MCF 10A (cell line): ENCODE measurements at regions of chr15 and their contacts with region 1.

Region 1: DNA sequence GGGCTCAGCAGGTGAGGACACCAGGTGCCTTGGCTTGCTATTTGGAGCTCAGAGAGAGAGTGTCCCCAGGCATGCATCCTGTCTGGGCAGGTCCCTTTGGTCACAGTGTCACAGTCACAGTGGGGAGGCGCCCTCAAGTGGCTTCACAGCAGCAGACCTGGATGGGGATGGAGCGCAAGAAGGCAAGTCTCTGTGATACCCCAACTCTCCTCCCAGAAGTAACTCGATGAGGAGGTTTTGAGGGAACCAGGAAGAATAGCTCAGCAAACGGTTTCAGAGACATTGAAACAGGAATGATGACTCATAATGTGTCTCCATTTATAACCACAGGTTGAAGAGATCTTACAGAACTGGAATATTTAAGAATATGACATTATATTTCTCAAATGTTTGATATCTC is 66.5 kb upstream of the SH3GL3 start:
- DNase-seq: peak; percentile 79
- H3K4me3 Mint-ChIP-seq: peak overlapping the region; percentile 17
- H3K27ac Mint-ChIP-seq: peak overlapping the region; percentile 87
- H3K4me1 Mint-ChIP-seq: peaks cover 37% of the 10 kb centered on the region
- H3K27me3 Mint-ChIP-seq: no peaks in the 10 kb centered on the region
- CTCF ChIP-seq: peak; percentile 26

Region 2: GRCh38 chr15:83011271-83012075 is 369.2 kb before region 1 on chr15 and contains the start of gene C15orf40:
- CTCF ChIA-PET with region 1: no interaction called
- POLR2A ChIA-PET with region 1: interaction called, 4 read pairs
- intact Hi-C with region 1: loop called (anchors 2 kb)
- DNase-seq: peak; percentile 89
- H3K4me3 Mint-ChIP-seq: peak within 1 kb of the TSS; percentile 82
- H3K27ac Mint-ChIP-seq: peak within 1 kb of the TSS; percentile 82
- H3K4me1 Mint-ChIP-seq: peaks cover 24% of the 10 kb centered on the region
- H3K27me3 Mint-ChIP-seq: no peaks in the 10 kb centered on the region
- CTCF ChIP-seq: peak; percentile 37
- total RNA-seq, gene C15orf40: 38.1 and 39.3 TPM in 2 replicates

Region 3: DNA sequence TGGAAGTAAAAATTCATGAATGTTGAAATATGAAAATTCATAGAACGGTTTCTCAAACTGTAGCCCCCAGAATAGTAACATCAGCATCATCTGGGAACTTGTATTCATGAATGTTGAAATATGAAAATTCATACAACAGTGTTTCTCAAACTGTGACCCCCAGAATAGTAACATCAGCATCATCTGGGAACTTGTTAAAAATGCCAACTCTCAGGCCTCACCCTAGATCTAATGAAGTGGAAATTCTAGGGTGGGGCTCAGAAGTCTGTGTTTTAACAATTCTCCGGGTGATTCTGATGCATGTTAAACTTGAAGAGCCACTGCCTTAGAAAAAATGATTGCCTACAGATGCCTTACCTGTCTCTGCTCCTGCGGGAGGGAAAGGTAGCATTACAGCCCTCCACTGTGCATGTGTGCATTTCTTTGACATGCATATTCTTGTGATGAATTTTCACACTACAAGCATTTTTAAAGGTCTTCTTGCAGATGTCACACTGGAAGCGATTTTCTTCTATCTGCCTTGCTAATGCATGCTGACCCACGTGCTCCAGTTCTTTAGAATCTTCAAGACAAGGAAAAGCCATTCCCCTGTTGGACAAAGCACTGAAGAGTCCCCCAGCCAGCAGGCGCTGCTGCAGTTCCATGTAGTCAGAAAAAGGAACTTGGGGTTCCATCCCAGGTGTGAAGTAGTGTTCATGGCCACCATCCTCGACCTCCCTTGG is 117.9 kb before region 1 on chr15:
- CTCF ChIA-PET with region 1: interaction called, 4 read pairs
- POLR2A ChIA-PET with region 1: interaction called, 13 read pairs
- intact Hi-C with region 1: no loop called
- DNase-seq: no peak
- H3K4me3 Mint-ChIP-seq: no peak overlapping the region
- H3K27ac Mint-ChIP-seq: peak overlapping the region; percentile 64
- H3K4me1 Mint-ChIP-seq: peaks cover 3% of the 10 kb centered on the region
- H3K27me3 Mint-ChIP-seq: no peaks in the 10 kb centered on the region
- CTCF ChIP-seq: no peak

Region 4: DNA sequence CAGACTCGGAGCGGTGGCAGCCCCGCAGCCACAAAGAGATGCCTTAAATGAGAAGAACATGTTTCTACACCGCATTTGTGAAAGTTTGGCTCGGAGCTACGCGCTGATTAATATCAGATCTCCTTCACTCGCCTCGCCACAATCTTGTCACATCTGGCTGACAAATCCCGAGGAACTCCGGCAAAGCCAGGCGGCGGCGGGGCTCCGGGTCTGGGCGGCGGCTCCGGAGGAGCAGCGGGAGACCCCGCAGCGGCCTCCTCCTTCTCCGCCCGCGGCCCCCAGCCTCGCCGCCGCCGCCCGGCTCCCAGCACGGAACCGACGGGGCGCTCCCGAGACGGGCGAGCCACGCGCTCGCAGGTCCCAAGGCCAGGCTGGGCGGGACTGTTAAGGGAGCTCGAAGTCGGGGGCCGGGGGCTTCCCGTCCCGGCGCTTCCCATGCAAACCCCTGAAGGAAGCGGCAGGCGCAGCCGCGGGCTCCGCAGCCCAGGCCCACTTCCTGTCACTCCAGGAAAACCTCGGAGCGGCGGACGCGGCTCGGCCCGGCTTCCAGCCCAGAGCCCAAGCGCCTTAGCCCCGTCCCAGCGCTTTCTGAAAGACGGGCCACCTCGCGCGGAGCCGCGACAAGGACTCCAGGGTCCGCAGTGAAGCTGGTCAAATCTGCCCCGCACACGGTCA is 97.4 kb before region 1 on chr15:
- CTCF ChIA-PET with region 1: interaction called, 11 read pairs
- POLR2A ChIA-PET with region 1: interaction called, 73 read pairs
- intact Hi-C with region 1: loop called (anchors 2 kb)
- DNase-seq: no peak
- H3K4me3 Mint-ChIP-seq: peak overlapping the region; percentile 99
- H3K27ac Mint-ChIP-seq: peak overlapping the region; percentile 99
- H3K4me1 Mint-ChIP-seq: peaks cover 58% of the 10 kb centered on the region
- H3K27me3 Mint-ChIP-seq: no peaks in the 10 kb centered on the region
- CTCF ChIP-seq: no peak

Region 5: GRCh38 chr15:83305704-83306291 is 74.9 kb before region 1 on chr15:
- CTCF ChIA-PET with region 1: interaction called, 3 read pairs
- POLR2A ChIA-PET with region 1: interaction called, 29 read pairs
- intact Hi-C with region 1: no loop called
- DNase-seq: peak; percentile 89
- H3K4me3 Mint-ChIP-seq: peak overlapping the region; percentile 24
- H3K27ac Mint-ChIP-seq: peak overlapping the region; percentile 46
- H3K4me1 Mint-ChIP-seq: peaks cover 36% of the 10 kb centered on the region
- H3K27me3 Mint-ChIP-seq: no peaks in the 10 kb centered on the region
- CTCF ChIP-seq: no peak

Region 6: DNA sequence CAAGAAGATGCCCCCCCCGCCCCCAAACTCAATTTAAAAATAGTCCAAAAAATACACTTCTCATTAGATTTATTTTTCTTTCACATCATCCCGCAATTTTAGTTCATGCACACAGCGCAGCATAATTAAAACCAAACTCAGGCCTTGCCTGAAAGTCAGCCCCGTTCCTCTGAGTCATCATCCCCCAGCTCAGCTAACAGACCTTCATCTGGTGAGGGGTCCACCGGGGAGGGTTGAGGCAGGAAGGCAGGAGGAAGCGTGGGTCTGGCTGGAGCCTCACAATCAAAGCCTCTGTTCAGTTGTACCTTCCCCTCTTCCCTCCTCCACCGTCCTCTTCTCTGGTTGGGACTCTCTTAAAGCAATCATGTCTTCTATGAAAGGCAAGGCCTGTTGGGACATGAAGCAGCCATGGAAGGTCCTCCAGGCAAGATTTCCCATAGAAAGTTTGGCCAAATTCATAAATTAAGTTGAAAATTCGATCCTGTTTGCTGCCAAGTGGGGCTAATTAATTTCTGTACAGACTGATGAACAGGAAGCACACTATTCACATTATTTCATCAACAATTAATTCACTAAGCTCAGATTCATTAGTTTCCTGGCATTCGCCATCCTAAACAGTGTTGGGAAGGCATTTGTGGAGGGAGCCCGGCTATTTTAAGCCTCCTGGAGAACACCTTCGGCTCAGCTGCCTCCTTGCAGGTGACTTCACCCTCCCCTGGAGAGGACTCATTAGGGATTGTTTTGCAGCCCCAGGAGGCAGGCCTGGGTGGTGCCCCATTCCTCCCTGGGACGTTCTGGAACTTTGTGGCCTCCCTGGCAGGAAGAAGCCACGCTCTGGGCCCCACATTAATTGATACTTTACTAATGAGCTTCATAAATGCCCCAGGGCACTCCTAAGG is 23.9 kb before region 1 on chr15:
- CTCF ChIA-PET with region 1: interaction called, 10 read pairs
- POLR2A ChIA-PET with region 1: interaction called, 5 read pairs
- intact Hi-C with region 1: no loop called
- DNase-seq: no peak
- H3K4me3 Mint-ChIP-seq: no peak overlapping the region
- H3K27ac Mint-ChIP-seq: peak overlapping the region; percentile 63
- H3K4me1 Mint-ChIP-seq: peaks cover 22% of the 10 kb centered on the region
- H3K27me3 Mint-ChIP-seq: no peaks in the 10 kb centered on the region
- CTCF ChIP-seq: no peak

Region 7: DNA sequence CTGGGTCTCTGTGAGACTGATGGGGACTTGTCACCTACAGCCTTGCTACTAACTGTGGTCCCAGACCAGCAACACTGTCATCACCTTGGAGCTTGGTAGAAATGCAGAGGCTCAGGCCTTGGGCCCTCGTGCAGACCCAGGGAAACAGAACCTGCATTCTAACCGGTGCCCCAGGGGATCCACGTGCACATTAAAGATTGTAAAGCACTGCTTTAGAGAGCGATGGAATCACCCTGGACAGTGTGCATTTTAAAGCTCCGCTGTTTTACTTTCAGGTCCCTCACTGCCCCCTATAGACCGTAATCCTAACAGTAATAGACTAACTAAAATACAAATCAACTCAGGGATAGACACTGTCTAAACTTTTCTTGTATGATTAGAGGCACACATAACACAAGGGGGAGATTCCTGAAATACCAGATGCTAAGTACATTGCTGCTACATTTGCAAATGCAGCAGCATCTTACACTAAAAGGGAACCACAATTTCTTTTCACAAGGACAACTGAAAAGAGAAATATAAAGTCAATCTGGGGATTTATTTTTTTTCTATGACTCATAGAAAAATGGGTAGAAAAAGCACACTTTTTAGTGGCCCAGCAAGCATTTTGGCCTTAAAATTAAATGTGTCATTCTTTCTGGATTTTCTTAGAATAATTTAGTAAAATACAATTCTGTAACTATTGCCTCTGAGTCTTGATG is 55.9 kb after region 1 on chr15:
- CTCF ChIA-PET with region 1: interaction called, 4 read pairs
- POLR2A ChIA-PET with region 1: interaction called, 3 read pairs
- intact Hi-C with region 1: loop called (anchors 2 kb)
- DNase-seq: peak; percentile 74
- H3K4me3 Mint-ChIP-seq: no peak overlapping the region
- H3K27ac Mint-ChIP-seq: no peak overlapping the region
- H3K4me1 Mint-ChIP-seq: peaks cover 20% of the 10 kb centered on the region
- H3K27me3 Mint-ChIP-seq: no peaks in the 10 kb centered on the region
- CTCF ChIP-seq: peak; percentile 59

Region 8: DNA sequence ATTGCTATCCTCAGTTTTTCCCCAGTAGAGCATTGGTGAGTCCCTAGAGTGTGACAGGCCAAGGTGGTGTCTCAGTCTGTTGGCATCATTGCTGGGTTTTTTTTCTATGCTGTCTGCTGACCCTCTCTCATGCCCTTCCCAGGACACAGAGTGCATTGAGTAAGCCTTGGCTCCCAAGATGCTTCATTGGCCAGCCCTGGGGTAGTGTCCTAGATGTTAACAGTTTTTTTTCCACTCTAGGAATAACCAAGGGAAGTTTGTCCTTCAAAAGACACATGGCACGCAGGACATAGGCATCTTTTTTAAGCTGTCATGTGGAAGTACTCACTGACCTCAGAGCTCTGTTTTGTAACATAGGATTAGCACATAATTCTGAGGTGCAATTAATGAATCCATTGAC is 292.7 kb after region 1 on chr15:
- CTCF ChIA-PET with region 1: no interaction called
- POLR2A ChIA-PET with region 1: no interaction called
- intact Hi-C with region 1: no loop called
- DNase-seq: no peak
- H3K4me3 Mint-ChIP-seq: no peak overlapping the region
- H3K27ac Mint-ChIP-seq: no peak overlapping the region
- H3K4me1 Mint-ChIP-seq: no peaks in the 10 kb centered on the region
- H3K27me3 Mint-ChIP-seq: no peaks in the 10 kb centered on the region
- CTCF ChIP-seq: no peak